Adrenal gland (tissue), 19 donors: ENCODE measurements at regions of chr2 and their contacts with region 1.

Region 1: GRCh38 chr2:16281451-16282336 is 341.3 kb downstream of the MYCN start:
- DNase-seq: peak in 6 of 7 donors; percentile 31 to 68 (median 36)
- H3K4me3 ChIP-seq: no peak overlapping the region
- H3K27ac ChIP-seq: no peak overlapping the region
- H3K4me1 ChIP-seq: no peaks in the 10 kb centered on the region
- H3K27me3 ChIP-seq: no peaks in the 10 kb centered on the region
- CTCF ChIP-seq: peak; percentile 34 to 62 (median 50)
- POLR2A ChIP-seq: no peak

Region 2: GRCh38 chr2:15939854-15940660 is 341.6 kb before region 1 on chr2 and contains the start of gene MYCN:
- intact Hi-C with region 1: loop called (anchors 2 to 10 kb)
- DNase-seq: peak in 6 of 7 donors; percentile 15 to 76 (median 50)
- H3K4me3 ChIP-seq: peak within 1 kb of the TSS in 2 of 4 donors; percentile 24 to 48
- H3K27ac ChIP-seq: no peak within 1 kb of the TSS
- H3K4me1 ChIP-seq: peaks cover 19 to 30% of the 10 kb centered on the region in 2 donors
- H3K27me3 ChIP-seq: peaks cover 35% of the 10 kb centered on the region
- CTCF ChIP-seq: peak in 4 of 6 experiments; percentile 65 to 85 (median 78)
- POLR2A ChIP-seq: no peak
- total RNA-seq, gene MYCN: 0.24 to 2.2 (median 1.4) TPM

Region 3: GRCh38 chr2:16429431-16430145 is 147.9 kb after region 1 on chr2:
- intact Hi-C with region 1: no loop called
- DNase-seq: no peak
- H3K4me3 ChIP-seq: no peak overlapping the region
- H3K27ac ChIP-seq: no peak overlapping the region
- H3K4me1 ChIP-seq: no peaks in the 10 kb centered on the region
- H3K27me3 ChIP-seq: no peaks in the 10 kb centered on the region
- CTCF ChIP-seq: no peak
- POLR2A ChIP-seq: no peak

Region 4: GRCh38 chr2:16507655-16508489 is 226.2 kb after region 1 on chr2:
- intact Hi-C with region 1: loop called in 1 of 2 experiments (anchors 10 kb)
- DNase-seq: peak in 6 of 7 donors; percentile 45 to 56 (median 53)
- H3K4me3 ChIP-seq: peak overlapping the region in 2 of 4 donors; percentile 30 to 54
- H3K27ac ChIP-seq: no peak overlapping the region
- H3K4me1 ChIP-seq: peaks cover 7 to 9% of the 10 kb centered on the region in 2 donors
- H3K27me3 ChIP-seq: peaks cover 26% of the 10 kb centered on the region
- CTCF ChIP-seq: peak; percentile 21 to 73 (median 52)
- POLR2A ChIP-seq: no peak